Breast epithelium (tissue), 4 donors: ENCODE measurements at regions of chr20 and their contacts with region 1.

Region 1: DNA sequence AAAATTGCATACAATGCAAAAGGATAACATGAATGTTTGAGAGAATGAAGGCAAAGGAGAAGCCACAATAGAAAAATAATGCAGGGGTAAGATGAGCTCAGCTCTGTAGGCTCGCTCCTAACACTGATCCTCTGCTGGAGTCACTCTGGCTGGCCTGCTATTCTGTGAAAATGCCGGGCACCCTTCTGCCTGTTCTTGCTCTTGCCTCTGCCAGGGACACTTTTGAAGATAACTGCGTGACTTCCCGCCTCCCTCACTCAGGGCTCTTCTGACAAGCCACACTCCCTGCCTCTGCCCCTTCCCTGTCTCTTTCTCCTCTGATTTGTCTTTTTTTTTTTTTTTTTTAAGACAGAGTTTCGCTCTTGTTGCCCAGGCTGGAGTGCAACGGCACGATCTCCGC is 35.3 kb upstream of the MYBL2 start:
- DNase-seq: no peak
- H3K4me3 ChIP-seq: no peak overlapping the region
- H3K27ac ChIP-seq: no peak overlapping the region
- H3K4me1 ChIP-seq: no peaks in the 10 kb centered on the region
- H3K27me3 ChIP-seq: no peaks in the 10 kb centered on the region
- CTCF ChIP-seq: no peak
- POLR2A ChIP-seq: no peak

Region 2: GRCh38 chr20:43650997-43651525 is 19.5 kb after region 1 on chr20:
- intact Hi-C with region 1: loop called (anchors 2 kb)
- DNase-seq: no peak
- H3K4me3 ChIP-seq: no peak overlapping the region
- H3K27ac ChIP-seq: no peak overlapping the region
- H3K4me1 ChIP-seq: no peaks in the 10 kb centered on the region
- H3K27me3 ChIP-seq: no peaks in the 10 kb centered on the region
- CTCF ChIP-seq: no peak
- POLR2A ChIP-seq: no peak